ENCODE measurements at regions of chr18 and their contacts with region 1.

Region 1: DNA sequence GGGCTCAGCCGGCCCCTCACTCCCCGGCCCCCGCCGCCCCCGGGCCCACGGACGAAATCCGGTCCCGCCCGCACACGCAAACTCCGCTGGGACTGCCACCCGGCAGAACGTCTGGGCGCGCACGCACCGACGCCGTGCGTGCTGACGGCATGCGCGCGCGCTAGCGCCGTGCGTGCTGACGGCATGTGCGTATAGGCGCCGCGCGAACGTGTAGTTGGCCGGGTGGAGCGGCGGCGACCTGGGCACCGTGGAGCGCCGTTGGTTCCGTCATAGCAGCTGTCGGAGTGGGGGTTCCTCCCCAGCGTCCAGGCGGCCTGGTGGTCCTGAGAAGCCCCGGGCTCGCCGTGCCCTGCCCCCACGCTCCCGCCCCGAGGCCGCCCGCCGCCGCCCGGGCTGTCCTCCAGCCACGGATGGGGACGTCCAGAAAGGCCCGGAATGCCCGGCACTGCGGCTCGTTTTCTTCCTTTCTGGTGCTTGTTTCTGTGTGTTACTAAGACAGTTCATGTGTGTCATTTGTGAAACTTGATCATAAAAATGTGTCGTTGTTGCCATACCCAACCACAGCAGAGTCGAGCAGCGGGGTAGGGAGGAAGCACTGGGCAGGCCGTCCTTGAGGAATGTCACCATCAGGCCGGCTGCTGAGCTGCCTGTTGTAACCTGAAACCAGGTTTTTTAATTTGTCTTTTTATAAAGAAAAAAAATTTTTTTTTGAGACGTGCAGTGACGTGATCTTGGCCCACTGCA is at the start of gene TXNL4A:
- DNase-seq: peak; percentile 80
- H3K4me3 Mint-ChIP-seq: peak within 1 kb of the TSS; percentile 86
- H3K27ac Mint-ChIP-seq: peak within 1 kb of the TSS; percentile 94
- H3K4me1 Mint-ChIP-seq: peaks cover 8% of the 10 kb centered on the region
- H3K27me3 Mint-ChIP-seq: no peaks in the 10 kb centered on the region
- CTCF ChIP-seq: no peak
- total RNA-seq, gene TXNL4A: 207 and 245 TPM in 2 replicates

Region 2: GRCh38 chr18:79951578-79952455 is 36.8 kb before region 1 on chr18 and contains the start of gene SLC66A2:
- CTCF ChIA-PET with region 1: no interaction called
- POLR2A ChIA-PET with region 1: interaction called, 32 read pairs
- intact Hi-C with region 1: no loop called
- DNase-seq: peak; percentile 78
- H3K4me3 Mint-ChIP-seq: peak within 1 kb of the TSS; percentile 75
- H3K27ac Mint-ChIP-seq: peak within 1 kb of the TSS; percentile 42
- H3K4me1 Mint-ChIP-seq: peaks cover 11% of the 10 kb centered on the region
- H3K27me3 Mint-ChIP-seq: no peaks in the 10 kb centered on the region
- CTCF ChIP-seq: no peak
- total RNA-seq, gene SLC66A2: 21.7 and 24.5 TPM in 2 replicates

Region 3: DNA sequence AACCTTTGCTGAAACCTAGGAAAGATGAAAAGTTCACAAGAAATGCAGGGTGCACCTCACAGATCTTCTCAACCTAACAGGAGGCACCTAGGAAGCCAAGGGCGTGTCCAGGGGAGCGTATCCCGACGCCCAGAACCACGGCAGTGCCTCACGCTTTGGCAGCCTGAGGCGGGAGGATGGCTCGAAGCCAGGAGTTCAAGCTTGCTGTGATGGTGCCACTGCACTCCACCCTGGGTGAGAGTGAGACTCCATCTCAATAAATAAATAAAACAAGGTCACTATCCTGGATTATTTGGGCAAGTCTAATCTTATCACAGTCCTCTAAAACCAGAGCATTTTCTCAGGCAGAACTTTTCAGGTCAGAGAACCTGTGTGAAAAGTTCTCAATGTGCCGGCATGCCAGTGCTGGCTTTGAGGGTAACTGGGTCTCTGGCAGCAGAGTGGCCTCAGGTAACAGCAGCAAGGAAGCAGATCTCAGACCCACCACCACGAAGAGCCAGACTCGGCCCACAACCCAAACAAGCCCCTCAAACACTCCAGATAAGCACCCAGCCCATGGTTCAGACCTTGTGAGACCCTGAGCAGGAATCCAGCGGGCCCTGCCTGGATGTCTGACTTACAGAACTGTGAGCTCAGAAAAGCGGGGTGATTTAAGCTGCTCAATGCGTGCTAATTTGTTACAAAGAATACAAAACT is 12.5 kb before region 1 on chr18:
- CTCF ChIA-PET with region 1: interaction called, 3 read pairs
- POLR2A ChIA-PET with region 1: interaction called, 27 read pairs
- intact Hi-C with region 1: no loop called
- DNase-seq: peak; percentile 65
- H3K4me3 Mint-ChIP-seq: no peak overlapping the region
- H3K27ac Mint-ChIP-seq: no peak overlapping the region
- H3K4me1 Mint-ChIP-seq: peaks cover 17% of the 10 kb centered on the region
- H3K27me3 Mint-ChIP-seq: no peaks in the 10 kb centered on the region
- CTCF ChIP-seq: no peak

Region 4: GRCh38 chr18:80034068-80034851 is 45.6 kb after region 1 on chr18 and contains the start of gene RBFA:
- CTCF ChIA-PET with region 1: interaction called, 4 read pairs
- POLR2A ChIA-PET with region 1: interaction called, 113 read pairs
- intact Hi-C with region 1: loop called (anchors 1 kb)
- DNase-seq: peak; percentile 96
- H3K4me3 Mint-ChIP-seq: peak within 1 kb of the TSS; percentile 92
- H3K27ac Mint-ChIP-seq: peak within 1 kb of the TSS; percentile 100
- H3K4me1 Mint-ChIP-seq: peaks cover 23% of the 10 kb centered on the region
- H3K27me3 Mint-ChIP-seq: no peaks in the 10 kb centered on the region
- CTCF ChIP-seq: peak; percentile 49
- total RNA-seq, gene RBFA: 38.2 and 47.4 TPM in 2 replicates

Region 5: DNA sequence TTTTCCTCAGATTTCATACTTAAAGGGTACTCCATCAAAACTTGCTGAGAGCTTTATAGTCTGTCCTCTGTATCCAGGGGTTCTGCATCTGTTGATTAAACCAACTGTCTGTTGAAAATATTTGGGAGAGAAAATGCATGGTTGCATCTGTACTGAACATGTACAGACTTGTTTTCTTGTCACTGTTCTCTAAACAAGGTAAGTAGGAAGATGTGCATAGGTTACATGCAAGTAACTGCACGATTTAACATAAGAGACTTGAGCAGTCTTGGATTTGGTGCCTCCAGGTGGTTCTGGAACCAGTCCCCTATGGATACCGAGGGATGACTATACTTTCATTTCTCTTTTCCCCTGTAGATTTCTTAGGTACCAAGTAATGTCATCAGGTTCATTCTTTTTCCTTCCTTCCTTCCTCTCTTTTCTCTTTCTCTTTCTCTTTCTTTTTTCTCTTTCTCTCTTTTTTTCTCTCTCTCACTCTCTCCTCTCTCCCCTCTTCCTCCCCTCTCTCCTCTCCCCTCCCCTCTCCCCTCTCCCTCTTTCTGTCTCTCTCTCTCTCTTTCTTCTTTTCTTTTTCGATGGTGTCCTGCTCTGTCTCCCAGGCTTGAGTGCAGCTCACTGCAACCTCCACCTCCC is 143.7 kb after region 1 on chr18:
- CTCF ChIA-PET with region 1: no interaction called
- POLR2A ChIA-PET with region 1: interaction called, 11 read pairs
- intact Hi-C with region 1: no loop called
- DNase-seq: peak; percentile 16
- H3K4me3 Mint-ChIP-seq: peak overlapping the region; percentile 58
- H3K27ac Mint-ChIP-seq: peak overlapping the region; percentile 85
- H3K4me1 Mint-ChIP-seq: peaks cover 24% of the 10 kb centered on the region
- H3K27me3 Mint-ChIP-seq: no peaks in the 10 kb centered on the region
- CTCF ChIP-seq: no peak

Measured in MCF 10A (cell line).